ENCODE measurements at regions of chr12 and their contacts with region 1.

Region 1: GRCh38 chr12:96906849-96907670 is at the start of gene NEDD1:
- DNase-seq: peak; percentile 88 to 90
- ATAC-seq: peak; percentile 84 to 92 (median 87)
- H3K4me3 ChIP-seq: peak within 1 kb of the TSS; percentile 72
- H3K4me3 Mint-ChIP-seq: peak within 1 kb of the TSS; percentile 97
- H3K27ac ChIP-seq: peak within 1 kb of the TSS; percentile 89
- H3K27ac Mint-ChIP-seq: peak within 1 kb of the TSS; percentile 97 to 98
- H3K4me1 ChIP-seq: peaks cover 14% of the 10 kb centered on the region
- H3K4me1 Mint-ChIP-seq: peaks cover 45 to 48% of the 10 kb centered on the region in 2 donors
- H3K27me3 ChIP-seq: no peaks in the 10 kb centered on the region
- H3K27me3 Mint-ChIP-seq: peaks cover 0 to 3% of the 10 kb centered on the region in 2 donors
- CTCF ChIP-seq: no peak
- total RNA-seq, gene NEDD1: 26.4 to 30.6 (median 29.2) TPM

Region 2: DNA sequence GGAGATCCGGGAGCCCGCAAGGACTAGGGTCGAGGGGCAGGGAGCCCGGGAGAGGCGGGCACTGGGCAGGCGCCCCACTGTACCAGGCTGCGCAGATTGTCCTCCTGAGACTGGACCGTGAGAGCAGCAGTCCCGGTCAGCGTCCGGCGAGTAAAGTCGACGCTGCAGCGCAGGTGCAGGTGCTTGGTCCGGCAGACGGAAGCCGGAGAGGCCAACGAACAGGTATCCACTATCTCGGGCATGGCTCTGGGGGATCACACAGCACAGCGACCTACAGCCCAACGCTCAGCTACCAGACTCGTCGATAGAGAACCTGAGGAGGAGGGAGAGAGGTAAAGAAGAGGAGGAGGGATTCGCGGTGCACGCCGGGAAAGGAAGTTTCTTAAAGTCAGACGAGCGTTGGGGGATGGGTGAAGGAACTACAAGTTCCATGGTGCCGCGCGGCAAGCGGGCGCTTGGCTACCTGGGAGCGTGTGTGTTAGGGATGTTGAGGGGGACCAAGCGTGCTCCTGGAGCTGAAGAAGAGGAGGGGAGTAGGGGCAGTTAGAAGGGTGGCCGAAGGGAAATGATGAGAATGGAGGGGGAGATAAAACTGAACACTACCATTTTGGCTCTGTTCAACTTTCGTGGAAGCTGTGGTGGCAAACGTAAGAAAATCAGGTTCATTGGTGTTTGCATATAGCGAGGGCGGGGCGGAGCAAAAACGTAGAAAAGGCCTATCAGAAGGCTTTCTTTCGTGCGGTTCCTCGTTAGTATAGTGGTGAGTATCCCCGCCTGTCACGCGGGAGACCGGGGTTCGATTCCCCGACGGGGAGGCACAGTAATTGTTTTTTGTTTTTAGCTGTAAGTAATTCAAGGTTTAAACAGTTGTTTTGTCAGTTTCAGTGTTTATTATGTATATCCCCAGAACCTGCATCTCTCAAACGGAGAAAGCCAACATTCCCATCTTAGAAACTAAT is 871.5 kb before region 1 on chr12 and contains the start of gene LTA4H:
- intact Hi-C with region 1: loop called (anchors 5 kb)
- DNase-seq: peak; percentile 93 to 99
- ATAC-seq: peak; percentile 94 to 99 (median 95)
- H3K4me3 ChIP-seq: peak within 1 kb of the TSS; percentile 97
- H3K4me3 Mint-ChIP-seq: no peak within 1 kb of the TSS
- H3K27ac ChIP-seq: peak within 1 kb of the TSS; percentile 78
- H3K27ac Mint-ChIP-seq: no peak within 1 kb of the TSS
- H3K4me1 ChIP-seq: peaks cover 8% of the 10 kb centered on the region
- H3K4me1 Mint-ChIP-seq: peaks cover 0 to 14% of the 10 kb centered on the region in 2 donors
- H3K27me3 ChIP-seq: no peaks in the 10 kb centered on the region
- H3K27me3 Mint-ChIP-seq: no peaks in the 10 kb centered on the region
- CTCF ChIP-seq: no peak
- total RNA-seq, gene LTA4H: 43.1 to 51.9 (median 48.3) TPM

Region 3: DNA sequence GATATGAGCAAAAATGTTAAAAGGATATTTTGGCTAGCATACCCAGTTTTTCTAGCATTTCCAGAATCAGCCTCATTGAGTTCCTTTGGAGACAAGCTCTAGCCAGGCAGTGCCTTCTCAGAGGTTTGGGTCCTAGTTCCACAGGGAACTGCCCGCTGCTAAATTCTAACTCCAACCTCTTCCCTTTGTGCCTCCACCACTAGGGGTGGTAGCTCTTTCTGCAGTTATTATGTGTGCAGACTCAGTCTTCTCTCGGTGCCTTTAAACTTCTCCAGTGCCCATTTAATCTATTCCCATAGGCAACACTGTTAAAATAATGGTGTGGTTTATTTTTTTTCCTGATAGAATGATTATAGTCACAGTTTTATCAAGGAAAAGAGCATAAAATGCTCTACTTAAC is 1665.0 kb after region 1 on chr12:
- intact Hi-C with region 1: no loop called
- DNase-seq: no peak
- ATAC-seq: no peak
- H3K4me3 ChIP-seq: no peak overlapping the region
- H3K4me3 Mint-ChIP-seq: no peak overlapping the region
- H3K27ac ChIP-seq: no peak overlapping the region
- H3K27ac Mint-ChIP-seq: no peak overlapping the region
- H3K4me1 ChIP-seq: peaks cover under 1% of the 10 kb centered on the region
- H3K4me1 Mint-ChIP-seq: peaks cover 1% of the 10 kb centered on the region in 2 donors
- H3K27me3 ChIP-seq: no peaks in the 10 kb centered on the region
- H3K27me3 Mint-ChIP-seq: no peaks in the 10 kb centered on the region
- CTCF ChIP-seq: no peak

Measured in natural killer cell (primary cell).